ENCODE measurements at regions of chr10 and their contacts with region 1.

Region 1: GRCh38 chr10:100518761-100519241 is 860 bp downstream of the SEC31B start:
- DNase-seq: no peak
- H3K4me3 ChIP-seq: no peak overlapping the region
- CTCF ChIP-seq: peak; percentile 58

Region 2: DNA sequence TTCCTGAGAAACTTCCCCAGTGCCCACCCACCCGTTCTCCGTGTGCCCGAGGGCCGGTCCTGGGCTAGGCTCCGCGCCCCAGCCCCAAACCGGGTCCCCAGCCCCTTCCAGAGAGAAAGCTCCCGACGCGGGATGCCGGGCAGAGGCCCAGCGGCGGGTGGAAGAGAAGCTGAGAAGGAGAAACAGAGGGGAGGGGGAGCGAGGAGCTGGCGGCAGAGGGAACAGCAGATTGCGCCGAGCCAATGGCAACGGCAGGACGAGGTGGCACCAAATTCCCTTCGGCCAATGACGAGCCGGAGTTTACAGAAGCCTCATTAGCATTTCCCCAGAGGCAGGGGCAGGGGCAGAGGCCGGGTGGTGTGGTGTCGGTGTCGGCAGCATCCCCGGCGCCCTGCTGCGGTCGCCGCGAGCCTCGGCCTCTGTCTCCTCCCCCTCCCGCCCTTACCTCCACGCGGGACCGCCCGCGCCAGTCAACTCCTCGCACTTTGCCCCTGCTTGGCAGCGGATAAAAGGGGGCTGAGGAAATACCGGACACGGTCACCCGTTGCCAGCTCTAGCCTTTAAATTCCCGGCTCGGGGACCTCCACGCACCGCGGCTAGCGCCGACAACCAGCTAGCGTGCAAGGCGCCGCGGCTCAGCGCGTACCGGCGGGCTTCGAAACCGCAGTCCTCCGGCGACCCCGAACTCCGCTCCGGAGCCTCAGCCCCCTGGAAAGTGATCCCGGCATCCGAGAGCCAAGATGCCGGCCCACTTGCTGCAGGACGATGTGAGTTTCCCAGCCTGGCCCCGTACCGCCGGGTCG is 171.8 kb before region 1 on chr10 and contains the start of gene SCD:
- CTCF ChIA-PET with region 1: interaction called, 538 read pairs
- POLR2A ChIA-PET with region 1: no interaction called
- DNase-seq: peak; percentile 54
- H3K4me3 ChIP-seq: peak within 1 kb of the TSS; percentile 84
- CTCF ChIP-seq: no peak

Region 3: GRCh38 chr10:100490531-100490930 is 28.3 kb before region 1 on chr10:
- CTCF ChIA-PET with region 1: interaction called, 422 read pairs
- POLR2A ChIA-PET with region 1: no interaction called
- DNase-seq: no peak
- H3K4me3 ChIP-seq: no peak overlapping the region
- CTCF ChIP-seq: no peak

Region 4: DNA sequence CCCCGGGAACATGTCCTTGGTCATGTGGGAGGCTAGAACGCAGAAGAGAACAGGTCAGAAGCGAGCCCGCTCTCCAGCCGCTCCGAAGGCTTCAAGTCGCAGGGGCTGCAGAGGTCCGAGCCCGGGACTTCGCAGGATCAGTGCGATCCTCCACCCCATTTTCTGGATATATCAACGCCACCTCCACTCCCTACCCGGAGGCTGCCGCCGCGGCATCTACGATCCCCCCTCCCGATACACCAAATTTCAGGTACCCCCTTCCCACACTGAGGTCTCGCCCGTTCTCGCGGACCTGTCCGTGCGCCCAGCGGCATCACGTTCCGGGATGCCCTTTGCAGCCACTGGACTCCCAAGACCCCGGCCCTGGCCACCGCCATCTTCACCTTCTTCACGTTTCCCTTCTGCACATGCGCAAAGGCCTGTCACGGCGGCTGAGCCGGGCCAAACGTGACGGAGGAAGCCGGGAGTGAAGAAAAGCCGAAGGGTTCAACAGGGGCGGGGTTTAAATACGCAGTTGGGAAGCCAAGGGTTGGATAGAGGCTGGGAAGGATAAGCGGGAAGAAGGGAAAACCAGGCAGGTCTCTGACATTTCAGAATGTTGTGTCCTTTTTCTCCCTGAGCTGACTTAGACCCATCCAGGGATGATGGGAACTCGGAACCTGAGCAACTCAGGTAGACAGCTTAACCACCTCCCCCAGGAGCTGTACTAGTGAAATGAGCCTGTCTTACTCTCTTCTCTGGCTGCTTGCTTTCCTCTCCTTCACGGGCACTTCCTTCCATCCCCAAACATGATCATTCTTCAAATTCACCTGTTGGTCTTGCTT is 10.9 kb after region 1 on chr10 and contains the start of gene NDUFB8:
- CTCF ChIA-PET with region 1: interaction called, 67 read pairs
- POLR2A ChIA-PET with region 1: no interaction called
- DNase-seq: no peak
- H3K4me3 ChIP-seq: peak within 1 kb of the TSS; percentile 98
- CTCF ChIP-seq: no peak